Endothelial cell of umbilical vein (primary cell): ENCODE measurements at regions of chr13 and their contacts with region 1.

Region 1: DNA sequence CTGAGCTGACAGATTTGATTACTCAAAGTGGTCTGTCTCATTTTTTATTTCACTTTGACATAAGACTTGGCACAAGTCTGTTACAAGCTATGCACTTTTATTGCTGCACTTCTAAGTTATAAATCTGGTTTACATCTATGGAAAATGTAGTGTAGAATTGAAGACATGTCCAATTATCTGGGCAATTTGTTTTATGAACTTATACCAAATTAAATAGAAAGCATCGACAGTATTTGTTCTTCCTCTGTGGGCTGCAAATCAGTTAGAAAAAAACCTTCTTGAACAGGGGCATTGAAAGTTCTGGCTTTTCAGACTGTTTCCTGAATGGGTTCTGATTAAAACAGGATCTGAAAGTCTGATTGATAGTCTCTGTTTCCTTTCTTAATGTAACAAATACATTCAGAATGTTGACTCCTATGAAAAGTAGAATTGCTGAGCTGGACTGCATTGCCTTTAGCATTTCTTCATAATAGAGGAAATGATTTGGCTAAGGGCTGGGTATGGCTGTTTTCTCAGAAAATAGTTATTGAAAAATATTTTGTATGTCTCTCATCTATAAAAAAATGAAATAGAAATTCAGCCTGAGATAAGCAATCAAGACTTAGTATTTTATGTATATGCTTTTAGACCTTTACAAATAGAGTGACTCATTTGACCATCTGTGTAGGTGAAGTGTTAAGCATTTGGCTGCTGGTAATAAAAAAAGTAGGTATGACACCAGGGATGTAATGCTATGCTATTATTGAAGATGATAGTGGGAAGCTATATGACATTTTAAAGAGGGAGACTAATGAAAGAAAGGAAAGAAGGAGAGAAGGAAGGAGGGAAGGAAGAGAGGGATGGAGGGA is 210.9 kb upstream of the SPRY2 start:
- DNase-seq: peak; percentile 88
- H3K4me3 ChIP-seq: no peak overlapping the region
- H3K27ac ChIP-seq: no peak overlapping the region
- H3K4me1 ChIP-seq: peaks cover 46% of the 10 kb centered on the region
- H3K27me3 ChIP-seq: no peaks in the 10 kb centered on the region
- CTCF ChIP-seq: no peak
- POLR2A ChIP-seq: no peak

Region 2: DNA sequence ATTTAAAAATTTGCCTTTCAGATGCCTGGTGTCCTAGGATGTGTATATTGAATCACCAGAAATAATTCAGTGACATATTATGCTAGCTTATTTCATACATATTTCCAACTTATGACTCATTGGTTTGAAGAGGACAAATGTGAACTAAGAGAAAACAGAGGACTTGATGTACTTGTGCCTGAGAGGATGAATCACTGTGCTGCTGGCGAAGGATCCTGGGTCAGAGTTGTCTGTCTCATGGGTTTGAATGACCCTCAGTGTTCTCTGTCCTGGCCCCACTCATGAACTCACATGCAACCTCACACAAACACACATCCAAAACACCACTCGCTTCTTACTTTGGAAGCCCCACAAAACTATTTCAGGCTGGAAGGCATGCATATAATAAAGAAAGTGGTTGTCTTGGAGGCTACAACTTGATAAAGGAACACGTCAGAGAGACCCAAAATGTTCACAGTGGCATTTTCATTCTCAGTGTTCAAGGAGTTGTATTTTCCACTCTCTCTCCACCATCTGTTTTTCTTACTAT is 82.0 kb before region 1 on chr13:
- CTCF ChIA-PET with region 1: no interaction called
- POLR2A ChIA-PET with region 1: no interaction called
- dilution Hi-C with region 1: no loop called
- intact Hi-C with region 1: loop called (anchors 1 kb)
- DNase-seq: peak; percentile 85
- H3K4me3 ChIP-seq: peak overlapping the region in 1 of 3 experiments; percentile 27
- H3K27ac ChIP-seq: peak overlapping the region; percentile 91
- H3K4me1 ChIP-seq: peaks cover 19% of the 10 kb centered on the region
- H3K27me3 ChIP-seq: no peaks in the 10 kb centered on the region
- CTCF ChIP-seq: no peak
- POLR2A ChIP-seq: no peak

Region 3: GRCh38 chr13:80529734-80530133 is 22.1 kb before region 1 on chr13:
- CTCF ChIA-PET with region 1: interaction called, 15 read pairs
- POLR2A ChIA-PET with region 1: no interaction called
- dilution Hi-C with region 1: no loop called
- intact Hi-C with region 1: loop called (anchors 2 kb)
- DNase-seq: peak; percentile 40
- H3K4me3 ChIP-seq: no peak overlapping the region
- H3K27ac ChIP-seq: peak overlapping the region; percentile 44
- H3K4me1 ChIP-seq: peaks cover 38% of the 10 kb centered on the region
- H3K27me3 ChIP-seq: no peaks in the 10 kb centered on the region
- CTCF ChIP-seq: no peak
- POLR2A ChIP-seq: no peak